Endothelial cell of umbilical vein (primary cell): ENCODE measurements at regions of chr6 and their contacts with region 1.

Region 1: DNA sequence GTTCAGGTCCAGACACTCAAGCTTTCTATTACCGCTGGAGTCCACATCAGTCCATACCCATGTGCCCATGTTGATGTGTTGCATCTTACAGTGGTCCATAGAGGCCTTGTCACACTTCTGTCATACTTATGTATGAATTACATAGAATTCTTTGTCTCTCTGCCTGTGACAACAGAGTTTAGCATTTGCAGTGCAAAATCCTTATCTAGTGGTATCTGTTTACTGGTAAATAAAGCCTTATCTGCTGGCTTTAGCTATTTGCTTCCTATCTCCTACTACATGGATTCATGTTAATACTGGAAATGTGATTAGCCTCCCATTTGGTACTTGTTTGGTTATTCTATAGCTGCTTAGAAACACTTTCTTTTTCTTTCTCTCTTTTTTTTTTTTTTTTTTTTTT is 49.8 kb downstream of the TFAP2B start:
- DNase-seq: no peak
- H3K4me3 ChIP-seq: no peak overlapping the region
- H3K27ac ChIP-seq: no peak overlapping the region
- H3K4me1 ChIP-seq: no peaks in the 10 kb centered on the region
- H3K27me3 ChIP-seq: no peaks in the 10 kb centered on the region
- CTCF ChIP-seq: no peak
- POLR2A ChIP-seq: no peak

Region 2: GRCh38 chr6:50698546-50698945 is 169.9 kb before region 1 on chr6:
- CTCF ChIA-PET with region 1: no interaction called
- POLR2A ChIA-PET with region 1: no interaction called
- dilution Hi-C with region 1: no loop called
- intact Hi-C with region 1: no loop called
- DNase-seq: no peak
- H3K4me3 ChIP-seq: no peak overlapping the region
- H3K27ac ChIP-seq: no peak overlapping the region
- H3K4me1 ChIP-seq: no peaks in the 10 kb centered on the region
- H3K27me3 ChIP-seq: no peaks in the 10 kb centered on the region
- CTCF ChIP-seq: no peak
- POLR2A ChIP-seq: no peak

Region 3: GRCh38 chr6:50905297-50905696 is 36.8 kb after region 1 on chr6:
- CTCF ChIA-PET with region 1: no interaction called
- POLR2A ChIA-PET with region 1: no interaction called
- dilution Hi-C with region 1: no loop called
- intact Hi-C with region 1: no loop called
- DNase-seq: no peak
- H3K4me3 ChIP-seq: no peak overlapping the region
- H3K27ac ChIP-seq: no peak overlapping the region
- H3K4me1 ChIP-seq: no peaks in the 10 kb centered on the region
- H3K27me3 ChIP-seq: no peaks in the 10 kb centered on the region
- CTCF ChIP-seq: no peak
- POLR2A ChIP-seq: no peak

Region 4: DNA sequence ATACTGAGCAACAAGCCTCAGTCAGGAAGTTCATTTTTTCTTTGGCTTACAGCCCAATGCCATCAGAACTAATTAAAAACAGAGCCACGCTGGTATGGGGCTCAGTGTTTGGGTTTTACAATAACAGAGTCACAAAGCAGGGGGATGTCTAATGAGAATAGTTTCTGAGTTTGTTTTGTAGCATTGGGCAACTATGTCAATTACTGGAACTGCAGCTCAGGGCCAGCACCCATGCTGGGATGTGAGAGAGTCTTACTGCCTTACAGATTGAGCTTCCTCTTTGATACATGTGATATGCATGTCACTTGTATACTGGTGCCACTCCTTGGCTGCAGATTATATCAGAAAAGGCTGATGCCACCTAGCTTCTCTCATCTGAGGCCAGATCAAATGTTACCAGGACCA is 67.8 kb after region 1 on chr6:
- CTCF ChIA-PET with region 1: no interaction called
- POLR2A ChIA-PET with region 1: no interaction called
- dilution Hi-C with region 1: no loop called
- intact Hi-C with region 1: no loop called
- DNase-seq: peak; percentile 9
- H3K4me3 ChIP-seq: no peak overlapping the region
- H3K27ac ChIP-seq: no peak overlapping the region
- H3K4me1 ChIP-seq: no peaks in the 10 kb centered on the region
- H3K27me3 ChIP-seq: no peaks in the 10 kb centered on the region
- CTCF ChIP-seq: no peak
- POLR2A ChIP-seq: no peak

Region 5: GRCh38 chr6:50979126-50979525 is 110.7 kb after region 1 on chr6:
- CTCF ChIA-PET with region 1: no interaction called
- POLR2A ChIA-PET with region 1: no interaction called
- dilution Hi-C with region 1: no loop called
- intact Hi-C with region 1: no loop called
- DNase-seq: no peak
- H3K4me3 ChIP-seq: no peak overlapping the region
- H3K27ac ChIP-seq: no peak overlapping the region
- H3K4me1 ChIP-seq: no peaks in the 10 kb centered on the region
- H3K27me3 ChIP-seq: no peaks in the 10 kb centered on the region
- CTCF ChIP-seq: no peak
- POLR2A ChIP-seq: no peak

Region 6: DNA sequence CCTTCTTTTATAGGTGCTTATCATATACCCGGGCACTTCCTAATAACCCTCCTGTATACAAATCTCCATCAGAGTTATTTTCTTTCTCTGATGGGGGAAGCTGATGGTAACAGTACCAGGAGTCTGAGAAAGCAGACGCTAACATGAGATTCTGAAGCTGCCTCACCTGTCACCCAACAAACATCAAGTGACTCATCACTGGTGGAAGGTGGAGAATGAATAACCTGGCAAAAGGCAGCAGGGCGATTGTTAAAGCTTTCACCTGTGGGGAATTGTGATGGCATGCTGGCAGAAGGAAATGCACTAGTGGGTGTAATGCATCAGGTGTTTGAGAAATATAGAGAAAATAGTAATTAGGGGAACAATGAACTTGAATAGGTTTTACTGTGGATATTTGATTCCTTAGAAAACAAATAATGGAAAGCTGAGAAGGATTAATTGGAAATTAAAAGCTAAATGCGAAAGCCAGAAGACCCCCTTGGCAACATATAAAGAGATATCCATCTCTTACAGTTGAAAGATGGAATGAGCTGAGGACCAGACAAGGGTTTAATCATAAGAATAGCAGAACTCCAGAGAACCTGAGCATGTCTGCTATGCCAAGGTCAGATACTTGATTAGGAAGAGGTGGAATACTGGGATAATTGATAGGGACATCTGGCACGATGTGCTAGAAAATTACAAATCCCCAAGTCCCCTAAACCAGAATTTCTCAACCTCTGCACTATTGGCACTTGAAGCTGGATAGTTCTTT is 701.9 kb after region 1 on chr6:
- CTCF ChIA-PET with region 1: no interaction called
- POLR2A ChIA-PET with region 1: no interaction called
- dilution Hi-C with region 1: no loop called
- intact Hi-C with region 1: loop called (anchors 5 kb)
- DNase-seq: no peak
- H3K4me3 ChIP-seq: no peak overlapping the region
- H3K27ac ChIP-seq: no peak overlapping the region
- H3K4me1 ChIP-seq: no peaks in the 10 kb centered on the region
- H3K27me3 ChIP-seq: no peaks in the 10 kb centered on the region
- CTCF ChIP-seq: no peak
- POLR2A ChIP-seq: no peak